Sciatic nerve (tissue), 2 donors: ENCODE measurements at regions of chr5 and their contacts with region 1.

Region 1: DNA sequence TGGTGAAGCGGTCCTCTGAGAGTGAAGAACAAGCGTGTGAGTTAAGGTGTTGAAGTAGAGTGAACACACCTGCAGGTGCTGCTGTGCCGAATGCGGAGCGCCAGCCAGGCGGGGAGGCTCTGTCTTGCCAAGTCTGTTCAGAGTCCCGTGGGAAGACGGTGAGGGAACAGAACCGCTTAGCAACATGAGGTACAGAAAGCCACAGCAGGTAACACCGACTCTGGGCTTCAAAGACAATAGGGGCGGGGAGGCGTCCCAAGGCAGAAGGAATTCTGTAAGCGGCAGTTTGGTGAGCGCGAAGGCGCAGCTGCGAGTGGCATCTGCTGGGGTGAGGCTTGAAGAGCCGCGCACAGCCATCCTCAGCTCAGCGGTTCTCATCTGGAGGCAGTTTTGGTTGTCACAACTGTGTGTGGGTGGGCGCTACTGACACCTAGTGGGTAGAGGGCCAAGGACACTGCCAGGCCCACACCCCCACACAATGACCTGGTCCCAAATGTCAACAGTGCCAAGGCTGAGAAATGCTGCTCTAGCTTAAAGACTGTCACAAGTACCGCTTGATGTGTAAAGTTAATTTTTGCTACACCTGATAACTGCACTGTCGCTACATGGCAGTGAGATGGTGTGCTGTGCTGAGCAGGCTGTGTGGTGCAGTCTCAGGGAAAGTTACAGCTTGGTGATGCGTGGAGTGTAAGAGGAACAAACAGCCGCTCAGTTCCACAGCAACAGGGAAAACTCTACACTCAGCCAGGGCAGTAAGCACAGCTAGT is 67.4 kb upstream of the TBC1D9B start:
- DNase-seq: no peak
- ATAC-seq: peak; percentile 63

Region 2: GRCh38 chr5:180084688-180085561 is 109.8 kb after region 1 on chr5:
- intact Hi-C with region 1: loop called (anchors 10 kb)
- DNase-seq: no peak
- ATAC-seq: no peak